Activated CD4-positive, alpha-beta T cell treated with anti-CD3 and anti-CD28 coated beads, Interleukin-2, amount 10 ng/mL, durations not matched to agents 24 days and 14 days (primary cell): ENCODE measurements at regions of chr14 and their contacts with region 1.

Region 1: DNA sequence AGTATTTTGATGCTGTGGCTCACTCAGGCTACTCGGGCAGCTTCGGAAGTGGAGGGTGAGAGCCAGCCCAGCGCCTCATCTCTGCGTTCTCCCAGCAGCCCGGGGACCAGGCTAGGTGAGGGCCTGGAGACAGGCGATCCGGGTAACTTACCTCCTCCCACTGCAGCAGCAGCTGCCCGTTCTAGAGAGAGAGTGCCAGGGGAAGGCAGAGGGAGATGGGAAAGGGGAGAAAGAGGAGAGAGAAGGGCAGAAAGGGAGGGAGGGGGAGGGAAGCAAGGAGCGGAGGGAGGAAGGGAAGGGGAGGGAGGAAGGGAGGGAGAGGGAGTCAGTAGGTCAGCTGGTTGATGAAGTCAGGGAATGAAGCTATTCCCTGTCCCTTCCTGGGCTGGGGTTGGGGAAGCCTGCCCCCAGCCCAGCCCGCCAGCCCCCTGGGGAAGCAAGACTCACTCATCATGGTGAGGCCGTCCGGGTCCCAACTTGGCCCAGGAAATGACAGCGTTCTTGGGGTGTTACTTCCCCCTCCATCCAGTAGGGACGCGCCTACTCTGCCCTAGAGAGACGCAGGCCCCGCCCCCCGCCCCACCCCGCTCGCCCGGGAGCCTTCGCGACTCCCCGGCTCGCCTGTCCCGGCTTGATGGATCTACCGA is at the start of gene IFI27L2:
- DNase-seq: peak; percentile 91
- H3K4me3 Mint-ChIP-seq: peak within 1 kb of the TSS; percentile 96
- H3K27ac Mint-ChIP-seq: peak within 1 kb of the TSS; percentile 91
- H3K4me1 Mint-ChIP-seq: peaks cover 24% of the 10 kb centered on the region
- H3K27me3 Mint-ChIP-seq: peaks cover 20% of the 10 kb centered on the region
- total RNA-seq, gene IFI27L2: 37.3 and 38.8 TPM in 2 replicates

Region 2: DNA sequence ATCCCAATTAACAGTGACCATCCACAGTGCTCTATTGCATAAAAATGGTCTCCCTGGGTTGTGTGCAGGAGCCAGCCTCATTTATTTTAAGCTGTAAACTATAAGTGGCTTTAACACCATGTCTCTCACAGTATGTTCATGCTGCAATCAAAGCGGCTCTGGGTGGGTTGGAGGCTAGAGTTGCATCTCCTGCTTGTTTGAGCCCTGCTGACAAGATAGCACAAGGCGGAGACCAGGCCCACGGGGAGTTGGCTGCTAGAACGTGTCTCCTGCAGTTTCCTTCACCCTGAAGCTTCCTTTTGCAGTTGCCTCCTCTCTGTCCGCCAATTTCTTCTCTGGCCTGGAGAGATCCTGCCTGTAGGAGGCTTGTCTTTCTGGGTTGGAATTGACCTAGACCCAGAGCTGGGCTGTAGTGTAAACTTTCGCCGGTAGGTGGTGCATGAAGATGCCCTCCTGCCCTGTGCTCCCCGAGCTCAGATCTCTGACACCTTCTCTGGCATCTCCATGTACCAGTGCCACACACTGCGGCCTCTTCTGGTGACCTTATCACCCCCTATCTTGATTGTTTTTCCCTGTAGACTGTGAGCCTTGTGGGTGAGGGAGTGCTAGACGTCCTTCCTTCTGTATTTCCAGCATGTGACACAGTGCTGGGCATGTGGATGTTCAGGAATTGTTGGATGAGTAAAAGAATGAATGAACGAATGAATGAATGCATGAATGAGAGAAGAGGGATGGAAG is 92.8 kb before region 1 on chr14:
- intact Hi-C with region 1: loop called (anchors 1 kb)
- DNase-seq: peak; percentile 94
- H3K4me3 Mint-ChIP-seq: no peak overlapping the region
- H3K27ac Mint-ChIP-seq: peak overlapping the region; percentile 45
- H3K4me1 Mint-ChIP-seq: peaks cover 4% of the 10 kb centered on the region
- H3K27me3 Mint-ChIP-seq: no peaks in the 10 kb centered on the region

Region 3: GRCh38 chr14:94080471-94081289 is 48.6 kb before region 1 on chr14 and contains the start of gene DDX24:
- intact Hi-C with region 1: loop called (anchors 2 kb)
- DNase-seq: peak; percentile 99
- H3K4me3 Mint-ChIP-seq: peak within 1 kb of the TSS; percentile 87
- H3K27ac Mint-ChIP-seq: peak within 1 kb of the TSS; percentile 95
- H3K4me1 Mint-ChIP-seq: peaks cover 48% of the 10 kb centered on the region
- H3K27me3 Mint-ChIP-seq: no peaks in the 10 kb centered on the region
- total RNA-seq, gene DDX24: 262 and 286 TPM in 2 replicates

Region 4: DNA sequence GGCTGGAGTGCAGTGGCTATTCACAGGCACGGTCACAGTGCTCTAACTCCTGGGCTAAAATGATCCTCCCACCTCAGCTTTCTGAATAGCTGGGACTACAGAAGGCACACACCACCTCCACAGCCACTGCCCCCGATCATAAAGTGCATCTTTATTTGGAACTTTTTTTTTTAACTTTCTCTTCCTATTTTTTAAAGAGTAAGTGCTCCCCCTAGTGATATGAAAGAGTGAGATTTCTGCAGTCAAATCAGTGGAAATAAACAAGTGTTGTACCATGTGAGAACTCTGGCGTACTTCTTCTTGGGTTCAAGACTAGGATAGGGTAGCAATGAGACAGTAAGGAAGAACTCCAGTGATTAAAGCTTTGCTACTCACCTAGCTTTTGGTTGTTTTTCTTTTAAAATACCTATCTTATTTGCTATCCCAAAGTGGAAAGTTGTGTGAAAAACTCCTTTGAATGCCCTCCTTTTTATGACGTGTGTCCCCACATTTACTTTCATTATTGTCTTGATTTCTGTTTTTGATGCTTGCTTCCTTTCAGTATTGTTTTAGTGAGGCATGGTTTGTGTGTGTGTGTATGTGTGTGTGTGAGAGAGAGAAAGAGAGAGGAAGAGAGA is 51.5 kb after region 1 on chr14:
- intact Hi-C with region 1: loop called (anchors 1 kb)
- DNase-seq: peak; percentile 76
- H3K4me3 Mint-ChIP-seq: peak overlapping the region; percentile 58
- H3K27ac Mint-ChIP-seq: peak overlapping the region; percentile 22
- H3K4me1 Mint-ChIP-seq: peaks cover 11% of the 10 kb centered on the region
- H3K27me3 Mint-ChIP-seq: peaks cover 25% of the 10 kb centered on the region

Region 5: DNA sequence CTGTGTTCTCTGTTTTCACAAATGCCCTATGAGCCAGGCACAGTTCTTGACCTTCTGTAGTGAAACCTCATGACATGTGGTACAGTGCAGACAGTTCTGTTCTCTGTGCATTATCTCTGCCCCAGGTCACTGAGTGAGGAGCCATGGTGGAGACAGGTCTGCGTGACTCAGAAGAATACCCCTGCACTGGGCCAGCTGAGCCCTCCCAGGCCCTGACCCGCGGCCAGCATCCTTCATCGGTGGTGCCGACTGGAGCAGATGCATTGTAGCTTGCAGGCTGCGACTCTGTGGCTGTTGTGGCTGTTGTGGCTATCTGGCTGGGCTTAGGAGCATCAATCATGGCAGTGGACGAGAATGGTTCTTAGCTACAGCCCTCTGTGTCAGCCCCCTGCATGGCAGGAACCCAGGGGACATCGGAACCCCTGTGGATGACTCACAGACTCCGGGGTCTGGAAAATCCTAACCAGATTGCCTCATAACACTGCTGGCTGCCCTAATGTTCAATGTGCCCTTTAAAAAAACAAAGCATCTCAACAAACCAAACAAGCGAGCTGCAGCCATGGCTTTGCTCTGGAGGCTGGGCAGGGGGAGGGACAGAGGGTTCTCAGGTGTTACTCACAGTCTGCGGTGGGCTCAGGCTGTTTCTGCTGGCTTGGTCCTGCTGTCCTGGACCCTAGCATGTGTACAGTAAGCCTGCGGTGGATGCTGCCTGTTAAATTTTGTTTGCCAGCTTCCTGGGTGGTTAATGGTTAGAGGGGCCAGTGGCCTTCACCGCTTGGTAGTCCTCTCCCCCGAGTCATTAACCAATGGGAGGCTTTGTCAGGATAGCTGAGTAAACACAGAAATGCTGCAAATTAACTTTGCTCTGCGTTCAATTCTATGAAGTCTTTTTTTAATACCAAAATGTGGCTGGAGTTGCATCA is 193.7 kb after region 1 on chr14 and contains the start of gene SERPINA6:
- intact Hi-C with region 1: no loop called
- DNase-seq: peak; percentile 45
- H3K4me3 Mint-ChIP-seq: no peak within 1 kb of the TSS
- H3K27ac Mint-ChIP-seq: no peak within 1 kb of the TSS
- H3K4me1 Mint-ChIP-seq: no peaks in the 10 kb centered on the region
- H3K27me3 Mint-ChIP-seq: peaks cover 5% of the 10 kb centered on the region
- total RNA-seq, gene SERPINA6: not detected in 2 replicates

Region 6: GRCh38 chr14:94548999-94549985 is 420.1 kb after region 1 on chr14:
- intact Hi-C with region 1: loop called (anchors 2 kb)
- DNase-seq: peak; percentile 87
- H3K4me3 Mint-ChIP-seq: no peak overlapping the region
- H3K27ac Mint-ChIP-seq: no peak overlapping the region
- H3K4me1 Mint-ChIP-seq: no peaks in the 10 kb centered on the region
- H3K27me3 Mint-ChIP-seq: peaks cover 8% of the 10 kb centered on the region